ENCODE measurements at regions of chr3 and their contacts with region 1.

Region 1: GRCh38 chr3:15268033-15268631 is 62.1 kb downstream of the CAPN7 start:
- DNase-seq: peak; percentile 84
- CTCF ChIP-seq: peak; percentile 97

Region 2: GRCh38 chr3:15205934-15206661 is 62.0 kb before region 1 on chr3 and contains the start of gene CAPN7:
- CTCF ChIA-PET with region 1: interaction called, 46 read pairs
- POLR2A ChIA-PET with region 1: no interaction called
- DNase-seq: peak; percentile 97
- CTCF ChIP-seq: peak; percentile 39

Region 3: DNA sequence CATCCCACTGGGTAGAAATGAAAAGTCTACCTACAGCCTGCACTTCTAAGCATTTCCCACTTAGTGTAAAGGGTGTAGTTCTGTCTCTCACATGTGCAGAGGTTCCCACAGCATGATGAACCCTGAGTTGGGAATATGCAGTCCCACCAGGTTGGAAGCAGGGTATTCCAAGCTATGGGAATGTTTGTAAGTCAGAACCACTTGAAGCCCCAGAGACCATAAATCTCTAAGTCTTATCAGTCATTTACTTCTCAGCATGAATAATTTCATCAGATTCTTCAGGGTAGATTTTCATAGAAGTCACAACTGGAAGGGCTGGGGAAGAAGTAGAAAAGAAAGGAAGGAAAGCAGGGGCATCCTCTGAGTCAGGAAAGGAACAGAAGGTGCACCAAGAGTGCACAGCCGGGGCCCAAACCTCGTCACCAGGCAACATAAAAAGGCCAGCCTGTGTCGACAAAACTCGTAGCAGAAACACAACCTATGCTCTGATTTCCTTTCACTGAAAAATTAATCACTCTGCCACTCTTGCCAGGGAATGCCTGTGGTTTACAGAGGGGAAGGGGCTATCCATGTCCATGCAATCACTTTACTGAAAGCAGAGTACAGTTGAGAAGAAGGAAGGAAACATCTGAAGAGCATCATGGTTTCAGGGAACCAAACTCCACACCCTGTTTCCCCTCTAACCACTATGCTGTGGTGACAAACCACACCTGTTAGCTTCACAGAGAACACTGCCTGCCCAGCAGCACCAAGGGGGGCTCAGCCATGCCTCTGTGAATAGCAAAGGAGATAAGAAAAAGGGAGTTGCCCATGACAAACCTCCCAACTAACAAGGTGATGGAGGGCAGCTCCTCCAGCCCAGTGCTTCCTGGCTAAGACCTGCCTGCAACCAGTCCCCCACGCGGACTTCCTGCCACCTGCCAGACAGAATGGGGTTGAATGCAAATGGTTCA is 23.7 kb after region 1 on chr3:
- CTCF ChIA-PET with region 1: interaction called, 203 read pairs
- POLR2A ChIA-PET with region 1: no interaction called
- DNase-seq: peak; percentile 69
- CTCF ChIP-seq: no peak

Region 4: GRCh38 chr3:15319575-15319974 is 51.4 kb after region 1 on chr3:
- CTCF ChIA-PET with region 1: interaction called, 17 read pairs
- POLR2A ChIA-PET with region 1: no interaction called
- DNase-seq: no peak
- CTCF ChIP-seq: no peak

Region 5: DNA sequence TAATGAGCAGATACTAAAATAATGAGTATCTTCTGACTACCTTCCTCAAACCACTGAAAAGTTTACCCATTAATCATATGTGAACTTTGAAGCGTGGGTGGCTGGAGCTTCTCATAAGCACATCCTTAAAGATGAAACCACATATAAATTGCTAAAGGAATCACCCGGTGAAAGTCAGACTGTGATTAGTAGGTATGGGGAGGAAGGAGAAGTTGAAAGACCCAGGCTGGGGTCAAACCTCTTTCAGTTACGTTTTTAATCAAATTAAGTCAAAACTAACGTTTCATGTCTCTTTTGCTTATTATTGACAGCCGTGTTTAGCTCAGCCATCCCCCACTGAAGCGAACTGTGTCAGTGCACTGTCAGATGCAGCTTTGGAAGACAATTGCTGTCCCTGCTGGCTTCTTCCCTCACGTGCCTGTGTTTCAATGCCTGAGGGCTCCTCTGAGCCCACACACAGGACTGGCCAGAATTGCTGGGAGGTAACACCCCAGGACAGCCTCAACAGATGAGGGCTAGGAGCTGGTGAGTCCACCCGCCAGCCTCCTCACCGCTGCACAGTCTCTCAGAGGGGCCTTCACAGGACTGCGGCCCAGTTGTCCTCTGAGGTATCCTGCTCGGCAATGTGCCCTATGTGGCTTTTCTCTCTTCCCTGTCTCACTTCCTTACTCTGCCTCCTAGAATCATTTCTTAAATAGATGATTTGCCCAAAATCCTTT is 93.5 kb after region 1 on chr3:
- CTCF ChIA-PET with region 1: interaction called, 28 read pairs
- POLR2A ChIA-PET with region 1: interaction called, 3 read pairs
- DNase-seq: peak; percentile 83
- CTCF ChIP-seq: no peak

Region 6: DNA sequence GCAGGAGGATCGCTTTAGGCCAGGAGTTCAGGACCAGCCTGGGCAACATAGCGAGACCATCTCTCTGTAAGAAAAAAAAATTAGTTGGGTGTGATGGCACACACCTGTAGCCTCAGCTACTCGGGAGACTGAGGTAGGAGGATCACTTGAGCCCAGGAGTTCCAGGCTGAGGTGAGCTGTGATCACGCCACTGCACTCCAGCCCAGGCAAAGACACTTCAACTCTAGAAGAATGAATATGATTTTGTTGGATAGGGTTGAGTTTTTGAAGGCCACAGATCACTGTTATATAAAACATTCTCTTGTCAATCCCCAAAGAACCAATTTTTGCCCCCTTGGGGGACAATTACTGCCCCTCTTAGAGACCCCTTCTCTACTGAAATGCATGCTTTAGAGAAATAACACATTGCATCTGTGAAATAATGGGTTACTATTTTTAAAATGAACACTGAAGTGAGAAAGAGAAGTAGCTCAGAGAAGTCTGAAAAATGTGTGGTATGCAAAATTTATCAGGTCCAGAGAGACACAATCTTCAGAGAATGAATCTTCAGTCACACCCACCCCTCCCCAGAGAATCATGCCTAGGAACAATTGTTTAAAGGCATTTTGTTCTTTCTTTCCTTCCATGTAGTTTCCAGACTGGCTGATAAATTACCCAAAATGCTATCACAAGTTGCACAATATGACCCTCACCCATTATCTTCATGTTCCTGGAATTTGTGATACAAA is 116.5 kb after region 1 on chr3:
- CTCF ChIA-PET with region 1: interaction called, 123 read pairs
- POLR2A ChIA-PET with region 1: no interaction called
- DNase-seq: peak; percentile 64
- CTCF ChIP-seq: no peak

Region 7: DNA sequence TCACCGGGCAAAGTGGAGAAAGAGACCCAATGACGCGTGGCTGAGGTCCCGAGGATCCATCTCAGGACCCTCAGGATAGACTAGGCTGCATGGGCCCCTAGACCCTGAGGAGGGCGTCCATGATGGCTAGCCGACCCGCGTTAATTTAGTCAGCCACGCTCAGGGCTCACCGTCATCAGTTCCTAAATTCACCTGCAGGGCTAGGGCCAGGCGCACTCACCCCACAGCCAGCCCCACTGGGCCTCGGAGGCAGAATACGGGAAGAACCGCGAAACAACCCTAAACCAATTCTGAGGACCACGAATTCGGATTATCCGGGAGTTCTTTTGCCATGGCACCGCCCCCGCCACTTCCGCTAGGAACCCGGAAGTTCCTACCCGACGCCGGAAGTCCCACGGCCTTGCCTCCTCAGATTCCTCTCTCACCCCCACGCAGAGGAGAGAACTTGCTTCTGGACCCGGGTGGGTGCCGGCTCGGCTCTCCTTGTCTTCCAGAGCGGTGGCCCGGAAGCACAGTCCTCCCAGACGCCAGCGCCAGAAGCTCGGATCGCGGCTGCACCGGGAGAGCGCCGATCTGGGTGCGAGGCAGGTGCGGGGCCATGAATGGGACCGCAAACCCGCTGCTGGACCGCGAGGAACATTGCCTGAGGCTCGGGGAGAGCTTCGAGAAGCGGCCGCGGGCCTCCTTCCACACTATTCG is 159.2 kb after region 1 on chr3 and contains the starts of genes EAF1 and METTL6:
- CTCF ChIA-PET with region 1: interaction called, 10 read pairs
- POLR2A ChIA-PET with region 1: no interaction called
- DNase-seq: peak; percentile 92
- CTCF ChIP-seq: no peak

Measured in GM10248 (cell line).